Gastrocnemius medialis (tissue), 4 donors: ENCODE measurements at regions of chrX and their contacts with region 1.

Region 1: GRCh38 chrX:9708904-9709553 is 56.6 kb downstream of the GPR143 start:
- DNase-seq: peak; percentile 6 to 44
- ATAC-seq: peak; percentile 33 to 62
- H3K4me3 ChIP-seq: no peak overlapping the region
- H3K27ac ChIP-seq: no peak overlapping the region
- H3K4me1 ChIP-seq: no peaks in the 10 kb centered on the region
- H3K27me3 ChIP-seq: no peaks in the 10 kb centered on the region
- CTCF ChIP-seq: peak; percentile 41 to 89 (median 75)
- POLR2A ChIP-seq: no peak

Region 2: DNA sequence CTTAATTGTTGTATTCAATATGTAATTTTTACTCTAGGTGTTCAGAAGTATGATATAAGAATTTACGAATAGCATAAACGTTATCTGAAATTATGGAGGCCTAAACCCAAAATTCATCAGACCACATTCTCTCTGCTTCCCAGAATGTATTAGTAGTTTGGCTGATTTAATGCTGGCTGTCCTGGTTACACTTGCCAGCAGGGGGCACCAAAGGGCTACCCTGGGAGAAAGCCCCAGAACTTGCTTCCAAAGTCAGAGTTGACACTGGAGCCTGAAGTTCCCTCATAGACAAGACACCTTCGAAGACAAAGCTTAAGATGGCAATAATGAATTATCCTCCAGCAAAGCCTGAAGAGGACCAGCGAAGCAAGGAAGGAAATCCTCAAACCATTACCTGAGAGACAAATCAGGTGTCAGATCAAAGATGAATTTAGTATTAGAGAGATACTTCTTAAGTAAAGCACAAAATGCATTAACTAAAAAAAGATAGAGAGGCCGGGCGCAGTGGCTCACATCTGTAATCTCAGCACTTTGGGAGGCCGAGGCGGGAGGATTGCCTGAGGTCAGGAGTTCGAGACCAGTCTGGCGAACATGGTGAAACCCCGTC is 965.8 kb before region 1 on chrX:
- in situ Hi-C with region 1: no loop called
- intact Hi-C with region 1: loop called (anchors 10 kb)
- DNase-seq: peak in 1 of 2 donors; percentile 31
- ATAC-seq: peak in 1 of 2 donors; percentile 36
- H3K4me3 ChIP-seq: no peak overlapping the region
- H3K27ac ChIP-seq: no peak overlapping the region
- H3K4me1 ChIP-seq: no peaks in the 10 kb centered on the region
- H3K27me3 ChIP-seq: peaks cover 0 to 3% (median 0%) of the 10 kb centered on the region in 3 donors
- CTCF ChIP-seq: peak; percentile 19 to 73 (median 58)
- POLR2A ChIP-seq: no peak

Region 3: DNA sequence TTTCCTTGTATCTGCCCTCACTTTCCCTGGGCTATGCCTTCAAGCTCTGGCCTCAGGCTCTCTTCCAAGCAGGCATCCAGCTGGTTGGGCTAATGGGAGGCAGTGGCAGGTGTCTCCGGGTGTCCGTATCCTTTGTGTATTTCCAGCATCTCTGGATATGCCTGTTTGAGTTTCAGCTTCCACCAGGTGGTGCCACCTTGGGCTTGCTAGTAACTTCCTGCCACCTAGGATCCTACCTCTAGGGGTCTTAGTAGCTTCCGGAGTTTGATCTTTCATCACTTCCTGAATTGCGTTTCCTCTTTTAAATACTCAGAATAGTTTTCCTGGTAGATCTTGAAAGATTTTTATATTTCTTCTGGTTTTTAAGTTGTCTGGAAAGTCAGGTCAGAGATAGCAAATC is 953.9 kb before region 1 on chrX:
- in situ Hi-C with region 1: loop called in 1 of 4 experiments (anchors 25 kb)
- intact Hi-C with region 1: no loop called
- DNase-seq: no peak
- ATAC-seq: no peak
- H3K4me3 ChIP-seq: no peak overlapping the region
- H3K27ac ChIP-seq: no peak overlapping the region
- H3K4me1 ChIP-seq: no peaks in the 10 kb centered on the region
- H3K27me3 ChIP-seq: no peaks in the 10 kb centered on the region
- CTCF ChIP-seq: no peak
- POLR2A ChIP-seq: no peak

Region 4: DNA sequence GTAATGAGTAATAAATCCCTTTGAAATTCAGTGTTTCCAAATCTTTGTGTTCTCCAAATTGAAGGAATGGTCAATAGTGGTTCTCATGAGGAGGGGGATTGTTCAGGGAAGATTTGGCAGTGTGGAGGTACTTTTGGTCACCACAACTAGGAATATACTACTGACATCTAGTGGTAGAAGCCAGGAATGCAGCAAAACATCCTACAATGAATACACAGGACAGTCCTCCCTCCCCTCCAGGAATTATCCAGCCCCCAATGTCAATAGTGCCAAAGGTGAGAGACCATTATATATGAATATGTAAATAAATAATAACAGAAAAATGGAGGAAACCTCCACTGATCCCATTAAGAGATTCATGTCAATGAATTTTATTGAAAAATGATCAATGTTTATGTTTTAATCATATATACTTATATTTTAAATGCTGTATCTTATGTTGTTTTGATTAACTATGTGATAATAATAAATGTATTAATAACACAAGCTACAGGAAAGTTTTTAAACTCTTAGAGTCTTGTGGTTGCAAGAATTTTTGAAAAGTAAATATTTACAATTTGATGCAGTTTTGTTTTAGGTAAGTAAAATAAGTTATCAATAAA is 893.5 kb before region 1 on chrX:
- in situ Hi-C with region 1: loop called in 1 of 4 experiments (anchors 25 kb)
- intact Hi-C with region 1: loop called (anchors 5 kb)
- DNase-seq: no peak
- ATAC-seq: no peak
- H3K4me3 ChIP-seq: no peak overlapping the region
- H3K27ac ChIP-seq: no peak overlapping the region
- H3K4me1 ChIP-seq: no peaks in the 10 kb centered on the region
- H3K27me3 ChIP-seq: no peaks in the 10 kb centered on the region
- CTCF ChIP-seq: peak; percentile 16 to 73 (median 50)
- POLR2A ChIP-seq: no peak

Region 5: GRCh38 chrX:8960817-8961489 is 748.1 kb before region 1 on chrX:
- in situ Hi-C with region 1: loop called in 3 of 4 experiments (anchors 10 to 25 kb)
- intact Hi-C with region 1: no loop called
- DNase-seq: no peak
- ATAC-seq: no peak
- H3K4me3 ChIP-seq: no peak overlapping the region
- H3K27ac ChIP-seq: no peak overlapping the region
- H3K4me1 ChIP-seq: no peaks in the 10 kb centered on the region
- H3K27me3 ChIP-seq: no peaks in the 10 kb centered on the region
- CTCF ChIP-seq: no peak
- POLR2A ChIP-seq: no peak

Region 6: GRCh38 chrX:8971116-8971515 is 737.9 kb before region 1 on chrX:
- in situ Hi-C with region 1: loop called (anchors 10 to 25 kb)
- intact Hi-C with region 1: no loop called
- DNase-seq: no peak
- ATAC-seq: no peak
- H3K4me3 ChIP-seq: no peak overlapping the region
- H3K27ac ChIP-seq: no peak overlapping the region
- H3K4me1 ChIP-seq: no peaks in the 10 kb centered on the region
- H3K27me3 ChIP-seq: no peaks in the 10 kb centered on the region
- CTCF ChIP-seq: peak in 4 of 5 experiments; percentile 20 to 30 (median 24)
- POLR2A ChIP-seq: no peak

Region 7: GRCh38 chrX:9515973-9516538 is 193.0 kb before region 1 on chrX:
- in situ Hi-C with region 1: no loop called
- intact Hi-C with region 1: no loop called
- DNase-seq: no peak
- ATAC-seq: no peak
- H3K4me3 ChIP-seq: no peak overlapping the region
- H3K27ac ChIP-seq: no peak overlapping the region
- H3K4me1 ChIP-seq: peaks cover 3 to 14% of the 10 kb centered on the region in 2 donors
- H3K27me3 ChIP-seq: no peaks in the 10 kb centered on the region
- CTCF ChIP-seq: no peak
- POLR2A ChIP-seq: no peak

Region 8: DNA sequence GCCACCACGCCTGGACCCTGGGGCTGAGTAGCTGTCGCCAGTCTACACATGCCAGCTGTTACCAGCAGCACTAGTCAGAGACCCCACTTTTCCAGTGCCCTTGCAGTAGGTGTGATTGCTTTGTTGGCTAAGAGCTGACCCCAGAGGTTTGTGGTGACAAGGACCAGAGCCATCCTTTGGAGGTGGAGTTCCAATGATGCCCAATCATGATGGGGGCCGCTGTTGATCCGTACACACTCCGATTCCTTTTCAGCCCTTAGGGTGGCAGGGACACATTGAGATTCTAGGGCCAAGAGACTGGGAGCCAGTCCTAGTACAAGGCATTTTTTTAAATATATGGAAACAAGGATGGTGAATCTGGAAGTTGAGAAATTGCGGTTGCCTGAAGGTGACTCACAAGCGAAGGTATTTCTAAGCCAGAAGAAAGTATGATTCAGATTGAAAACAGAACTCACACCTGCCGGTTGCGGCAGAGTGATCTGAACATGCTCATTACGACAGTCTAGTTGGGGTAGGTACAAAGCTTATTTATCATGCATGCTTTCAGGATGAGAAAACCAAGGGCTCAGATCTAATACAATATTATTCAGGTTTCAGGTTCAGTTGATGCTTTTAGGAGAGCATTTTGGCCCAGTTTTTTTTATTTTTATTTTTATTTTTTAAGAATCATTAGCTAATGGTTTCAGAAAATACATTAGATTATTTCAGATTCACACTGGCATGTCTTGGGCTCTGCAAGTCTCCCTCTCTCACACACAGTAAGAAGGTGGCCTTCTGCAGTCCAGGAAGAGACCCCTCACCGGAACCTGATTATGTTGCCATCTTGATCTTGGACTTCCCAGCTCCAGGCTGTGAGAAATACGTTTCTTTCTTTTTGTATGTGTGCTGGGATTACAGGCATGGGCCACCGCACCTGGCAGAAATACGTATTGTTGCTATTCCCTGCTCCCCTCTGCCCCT is 120.6 kb after region 1 on chrX:
- in situ Hi-C with region 1: no loop called
- intact Hi-C with region 1: no loop called
- DNase-seq: no peak
- ATAC-seq: no peak
- H3K4me3 ChIP-seq: no peak overlapping the region
- H3K27ac ChIP-seq: no peak overlapping the region
- H3K4me1 ChIP-seq: no peaks in the 10 kb centered on the region
- H3K27me3 ChIP-seq: no peaks in the 10 kb centered on the region
- CTCF ChIP-seq: no peak
- POLR2A ChIP-seq: no peak